ENCODE measurements at regions of chr20 and their contacts with region 1.

Region 1: DNA sequence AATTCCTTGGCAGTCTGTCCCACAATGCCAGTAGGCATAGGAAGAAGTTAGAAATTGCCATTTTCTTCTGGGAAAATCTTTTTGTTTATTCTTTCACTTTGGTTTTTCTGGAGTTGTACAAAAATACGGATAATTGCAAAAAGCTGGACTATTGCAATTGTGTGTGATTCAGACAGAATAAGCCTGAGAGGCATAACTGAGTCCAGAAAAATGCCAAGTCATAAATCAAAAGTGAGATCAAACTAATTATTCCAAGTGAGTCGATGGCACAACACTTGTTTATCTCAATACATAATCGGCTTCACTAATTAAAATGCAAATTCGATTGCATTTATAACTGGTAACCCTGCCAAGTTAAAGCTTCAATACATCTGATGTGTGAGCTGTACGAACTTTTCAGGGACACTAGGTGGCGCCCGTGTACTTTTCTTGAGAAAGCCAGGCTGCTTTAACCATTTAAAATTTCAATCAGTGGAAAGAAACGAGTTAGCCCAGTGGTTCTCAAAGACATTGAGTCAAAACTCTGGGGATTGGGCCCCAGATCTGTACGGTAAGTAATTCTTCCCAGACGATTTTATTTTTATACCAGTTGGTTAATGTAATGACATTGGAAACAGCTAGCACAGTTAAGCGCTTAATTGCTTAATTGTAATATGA is 102.6 kb downstream of the LAMP5 start:
- DNase-seq: peak in 1 of 2 experiments; percentile 67
- H3K4me3 ChIP-seq: no peak overlapping the region
- H3K27ac ChIP-seq: no peak overlapping the region
- H3K4me1 ChIP-seq: no peaks in the 10 kb centered on the region
- H3K27me3 ChIP-seq: no peaks in the 10 kb centered on the region
- CTCF ChIP-seq: peak in 2 of 3 experiments; percentile 79 to 85; a peak in 3 of 4 replicates
- EP300 ChIP-seq: no peak
- POLR2A ChIP-seq: no peak
- RAD21 ChIP-seq: peak; percentile 93 to 97

Region 2: DNA sequence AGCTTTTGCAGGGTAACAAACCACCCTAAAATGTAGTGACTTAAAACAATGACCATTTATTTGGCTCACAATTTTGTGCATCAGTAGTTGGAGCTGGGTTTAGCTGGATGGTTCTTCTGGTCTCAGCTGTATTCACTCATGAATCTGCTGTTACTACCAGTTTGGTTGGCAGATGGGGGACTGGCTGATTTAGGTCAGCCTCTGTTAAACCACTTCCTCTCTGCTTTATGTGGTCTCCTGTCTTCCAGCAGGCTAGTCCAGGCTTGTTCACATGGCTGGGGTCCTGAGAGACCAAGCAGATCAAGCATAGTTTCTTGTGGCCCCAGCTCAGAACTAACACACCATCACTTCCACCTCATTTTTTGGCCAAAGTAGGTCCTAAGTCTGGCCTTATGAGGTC is 169.8 kb before region 1 on chr20:
- CTCF ChIA-PET with region 1: interaction called, 10 read pairs
- POLR2A ChIA-PET with region 1: no interaction called
- DNase-seq: no peak
- H3K4me3 ChIP-seq: no peak overlapping the region
- H3K27ac ChIP-seq: no peak overlapping the region
- H3K4me1 ChIP-seq: no peaks in the 10 kb centered on the region
- H3K27me3 ChIP-seq: no peaks in the 10 kb centered on the region
- CTCF ChIP-seq: no peak
- EP300 ChIP-seq: no peak
- POLR2A ChIP-seq: no peak
- RAD21 ChIP-seq: no peak

Region 3: DNA sequence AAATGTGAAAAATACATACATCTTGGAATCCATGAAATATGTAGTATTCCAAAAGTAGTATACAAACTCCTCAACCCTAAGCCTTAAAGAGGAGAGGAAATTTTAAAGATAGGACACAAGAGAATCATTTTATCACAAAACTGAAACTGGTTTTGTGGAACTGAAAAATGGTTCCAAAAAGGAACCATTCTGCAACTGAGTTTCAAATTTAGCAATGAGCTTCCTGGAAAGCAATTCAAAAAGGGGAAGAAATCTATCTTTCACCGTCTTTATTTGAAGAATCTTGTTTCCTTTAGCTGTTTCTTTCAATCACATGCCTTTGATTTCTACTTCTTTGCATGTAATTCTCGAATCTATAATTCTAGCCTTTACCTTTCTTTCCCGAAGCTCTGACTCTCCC is 134.8 kb before region 1 on chr20:
- CTCF ChIA-PET with region 1: no interaction called
- POLR2A ChIA-PET with region 1: no interaction called
- DNase-seq: no peak
- H3K4me3 ChIP-seq: no peak overlapping the region
- H3K27ac ChIP-seq: no peak overlapping the region
- H3K4me1 ChIP-seq: no peaks in the 10 kb centered on the region
- H3K27me3 ChIP-seq: no peaks in the 10 kb centered on the region
- CTCF ChIP-seq: no peak
- EP300 ChIP-seq: no peak
- POLR2A ChIP-seq: no peak
- RAD21 ChIP-seq: no peak

Region 4: GRCh38 chr20:9555781-9556180 is 61.2 kb before region 1 on chr20:
- CTCF ChIA-PET with region 1: no interaction called
- POLR2A ChIA-PET with region 1: no interaction called
- DNase-seq: no peak
- H3K4me3 ChIP-seq: no peak overlapping the region
- H3K27ac ChIP-seq: no peak overlapping the region
- H3K4me1 ChIP-seq: no peaks in the 10 kb centered on the region
- H3K27me3 ChIP-seq: no peaks in the 10 kb centered on the region
- CTCF ChIP-seq: no peak
- EP300 ChIP-seq: no peak
- POLR2A ChIP-seq: no peak
- RAD21 ChIP-seq: no peak

Region 5: GRCh38 chr20:9627219-9627618 is 10.3 kb after region 1 on chr20:
- CTCF ChIA-PET with region 1: interaction called, 29 read pairs
- POLR2A ChIA-PET with region 1: no interaction called
- DNase-seq: no peak
- H3K4me3 ChIP-seq: no peak overlapping the region
- H3K27ac ChIP-seq: no peak overlapping the region
- H3K4me1 ChIP-seq: no peaks in the 10 kb centered on the region
- H3K27me3 ChIP-seq: no peaks in the 10 kb centered on the region
- CTCF ChIP-seq: no peak
- EP300 ChIP-seq: no peak
- POLR2A ChIP-seq: no peak
- RAD21 ChIP-seq: no peak

Region 6: DNA sequence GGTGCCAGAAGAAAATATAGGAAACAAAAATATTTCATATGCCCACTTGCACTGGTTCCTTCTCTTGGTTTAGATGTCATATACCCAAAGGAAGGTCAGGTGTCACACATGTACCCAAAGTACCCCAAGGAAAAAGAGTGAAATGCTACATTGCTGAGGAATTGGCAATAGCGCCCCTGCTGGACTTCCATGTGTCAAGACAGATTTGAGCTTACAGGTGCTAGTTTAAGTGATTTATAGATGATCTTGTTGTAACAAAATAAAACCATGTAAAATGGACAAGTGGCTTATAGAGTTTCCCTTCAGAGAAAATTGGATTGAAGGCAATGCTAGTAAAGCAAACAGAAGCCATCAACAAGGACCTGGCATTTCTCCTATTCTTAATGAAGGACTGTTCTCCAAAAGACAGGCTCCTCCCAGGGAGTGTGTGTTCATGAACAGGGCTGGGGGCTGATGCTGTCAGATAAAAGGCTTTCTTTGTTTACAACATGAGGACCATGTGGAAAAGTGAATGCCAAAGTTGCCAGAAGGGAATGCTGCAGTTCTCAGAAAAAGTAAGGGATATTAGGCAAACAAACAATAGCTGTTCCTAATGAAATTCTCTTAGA is 286.2 kb after region 1 on chr20:
- CTCF ChIA-PET with region 1: interaction called, 92 read pairs
- POLR2A ChIA-PET with region 1: no interaction called
- DNase-seq: peak in 1 of 2 experiments; percentile 60
- H3K4me3 ChIP-seq: no peak overlapping the region
- H3K27ac ChIP-seq: no peak overlapping the region
- H3K4me1 ChIP-seq: no peaks in the 10 kb centered on the region
- H3K27me3 ChIP-seq: no peaks in the 10 kb centered on the region
- CTCF ChIP-seq: peak in 2 of 3 experiments; percentile 68 to 81; a peak in 3 of 4 replicates
- EP300 ChIP-seq: no peak
- POLR2A ChIP-seq: no peak
- RAD21 ChIP-seq: peak; percentile 46 to 61; a peak in 3 of 4 replicates

Region 7: DNA sequence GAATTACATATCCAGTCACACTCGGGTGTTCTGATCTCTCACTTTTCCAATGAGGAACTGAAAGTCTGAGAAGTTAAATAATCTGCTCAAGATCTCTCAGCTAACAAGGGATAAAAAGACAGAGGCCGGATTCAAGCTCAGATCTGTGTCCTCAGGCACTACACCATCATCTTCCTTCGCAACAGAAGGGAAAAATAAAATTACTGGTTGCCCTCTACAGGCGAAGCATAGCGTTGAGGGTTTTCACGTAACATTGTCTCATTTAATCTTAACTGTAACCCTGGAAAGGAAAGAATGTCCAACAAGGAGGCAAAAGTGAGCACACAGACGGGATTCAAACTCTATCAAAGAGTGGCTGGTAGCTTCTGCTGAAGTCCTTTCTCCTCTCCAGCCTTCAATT is 350.0 kb after region 1 on chr20:
- CTCF ChIA-PET with region 1: interaction called, 16 read pairs
- POLR2A ChIA-PET with region 1: no interaction called
- DNase-seq: no peak
- H3K4me3 ChIP-seq: no peak overlapping the region
- H3K27ac ChIP-seq: no peak overlapping the region
- H3K4me1 ChIP-seq: peaks cover 0 to 4% (median 0%) of the 10 kb centered on the region in 4 experiments; a peak in 1 of 7 replicates
- H3K27me3 ChIP-seq: no peaks in the 10 kb centered on the region
- CTCF ChIP-seq: peak in 2 of 3 experiments; percentile 39 to 57; a peak in 2 of 4 replicates
- EP300 ChIP-seq: no peak
- POLR2A ChIP-seq: no peak
- RAD21 ChIP-seq: peak; percentile 41 to 46

Region 8: GRCh38 chr20:10090588-10091166 is 473.7 kb after region 1 on chr20:
- CTCF ChIA-PET with region 1: interaction called, 30 read pairs
- POLR2A ChIA-PET with region 1: no interaction called
- DNase-seq: peak in 1 of 2 experiments; percentile 19
- H3K4me3 ChIP-seq: no peak overlapping the region
- H3K27ac ChIP-seq: no peak overlapping the region
- H3K4me1 ChIP-seq: peaks cover 0 to 3% (median 0%) of the 10 kb centered on the region in 4 experiments; a peak in 1 of 7 replicates
- H3K27me3 ChIP-seq: no peaks in the 10 kb centered on the region
- CTCF ChIP-seq: peak; percentile 39 to 77 (median 73)
- EP300 ChIP-seq: no peak
- POLR2A ChIP-seq: no peak
- RAD21 ChIP-seq: peak; percentile 83 to 88